ENCODE measurements at regions of chr2 and their contacts with region 1.

Region 1: DNA sequence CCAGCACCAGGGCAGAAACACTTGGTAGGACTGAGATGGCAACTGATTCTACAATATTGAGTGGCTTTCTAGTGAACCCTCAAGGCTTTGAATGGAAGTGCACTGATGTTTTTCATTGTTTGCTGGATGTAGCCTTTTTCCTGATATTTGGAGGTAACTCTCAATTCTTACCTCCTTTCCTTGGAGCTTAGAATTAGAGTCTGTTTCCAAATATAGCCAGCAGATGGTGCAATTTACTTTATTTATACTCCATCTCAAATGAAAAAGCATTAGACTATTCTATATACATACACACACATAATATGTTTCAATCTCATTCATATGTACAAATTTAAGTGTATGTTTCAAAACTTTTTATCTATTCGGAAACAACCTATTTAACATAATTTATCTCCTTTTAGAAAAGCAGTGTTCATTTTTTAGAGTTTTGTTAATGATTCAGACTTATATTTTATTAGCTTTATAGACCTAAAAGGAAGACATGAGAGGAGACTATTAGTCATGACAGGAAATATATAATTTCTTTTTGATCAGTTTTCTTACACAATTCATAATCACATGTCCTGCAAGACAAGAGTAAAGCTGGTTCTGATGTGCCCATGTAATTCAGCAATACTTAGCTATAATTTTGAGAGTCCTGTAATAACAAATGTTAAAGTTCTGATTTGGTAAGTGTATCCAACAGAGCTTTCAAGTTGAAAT is 124.8 kb downstream of the NUP35 start:
- H3K4me3 ChIP-seq: no peak overlapping the region
- H3K27ac ChIP-seq: no peak overlapping the region
- H3K4me1 ChIP-seq: no peaks in the 10 kb centered on the region
- CTCF ChIP-seq: no peak

Region 2: DNA sequence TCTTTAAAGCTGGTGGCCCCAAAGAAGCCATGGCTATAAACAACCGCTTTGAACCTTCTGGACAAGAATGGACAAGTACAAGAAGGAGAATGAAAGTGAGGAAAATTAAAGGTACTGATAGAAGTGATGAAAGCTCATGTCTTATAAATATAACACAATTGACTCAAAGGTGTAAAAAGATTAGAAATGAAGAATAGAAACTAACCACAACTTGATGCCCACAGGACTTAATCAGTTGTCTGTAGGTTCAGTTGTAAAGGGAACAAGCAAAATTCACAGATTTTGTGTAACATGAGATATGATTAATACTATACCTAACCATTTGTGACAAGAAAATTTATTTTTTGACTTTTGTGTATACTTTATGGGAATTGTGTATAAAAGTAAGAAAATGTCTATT is 10.9 kb after region 1 on chr2:
- CTCF ChIA-PET with region 1: interaction called, 11 read pairs
- POLR2A ChIA-PET with region 1: no interaction called
- H3K4me3 ChIP-seq: no peak overlapping the region
- H3K27ac ChIP-seq: no peak overlapping the region
- H3K4me1 ChIP-seq: no peaks in the 10 kb centered on the region
- CTCF ChIP-seq: no peak

Region 3: GRCh38 chr2:183269956-183270355 is 20.9 kb after region 1 on chr2:
- CTCF ChIA-PET with region 1: no interaction called
- POLR2A ChIA-PET with region 1: no interaction called
- H3K4me3 ChIP-seq: no peak overlapping the region
- H3K27ac ChIP-seq: no peak overlapping the region
- H3K4me1 ChIP-seq: no peaks in the 10 kb centered on the region
- CTCF ChIP-seq: no peak

Region 4: GRCh38 chr2:183359867-183360266 is 110.8 kb after region 1 on chr2:
- CTCF ChIA-PET with region 1: interaction called, 13 read pairs
- POLR2A ChIA-PET with region 1: no interaction called
- H3K4me3 ChIP-seq: no peak overlapping the region
- H3K27ac ChIP-seq: no peak overlapping the region
- H3K4me1 ChIP-seq: no peaks in the 10 kb centered on the region
- CTCF ChIP-seq: no peak